ENCODE measurements at regions of chr6 and their contacts with region 1.

Region 1: DNA sequence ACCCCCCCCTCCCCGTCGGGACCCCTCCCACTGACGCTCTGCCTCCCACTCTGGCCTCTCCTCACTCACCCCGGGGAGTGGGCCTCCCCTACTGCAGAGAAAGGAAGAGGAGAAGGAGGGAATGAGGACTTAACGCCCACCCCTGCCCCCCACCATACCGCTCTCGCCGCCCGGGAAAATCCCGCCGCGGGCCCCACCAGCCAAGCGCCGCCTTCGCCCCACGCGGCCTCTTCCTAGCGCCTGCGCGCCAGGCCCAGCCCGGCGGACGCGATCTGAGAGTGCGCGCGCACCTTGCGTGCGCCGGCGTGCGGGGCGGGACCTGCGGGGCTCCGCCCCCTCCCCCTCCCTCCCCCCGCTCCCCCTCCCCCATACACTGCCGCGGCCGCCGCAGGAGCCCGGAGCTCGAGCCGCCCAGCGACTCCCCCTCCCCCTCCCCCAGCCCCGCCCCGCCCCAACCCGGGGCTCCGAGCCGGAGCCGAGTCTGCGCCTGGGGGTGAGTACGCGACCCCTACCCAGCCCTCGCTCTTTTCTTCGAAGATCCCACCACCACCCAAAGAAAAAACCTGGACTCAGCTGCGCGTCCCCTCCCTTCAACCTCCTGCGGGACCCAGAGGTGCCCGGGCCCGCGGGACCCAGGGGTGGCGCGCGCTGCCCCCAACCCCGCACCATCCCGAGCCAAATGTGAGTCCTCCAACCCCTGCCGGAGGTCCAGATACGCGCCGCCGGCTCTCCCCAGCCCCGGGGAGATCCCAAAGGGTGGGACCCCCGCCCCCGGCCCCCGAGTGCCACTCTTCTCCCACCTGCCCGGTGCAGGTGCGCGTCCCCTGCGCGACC is at the starts of genes MRPL14 and TMEM63B:
- DNase-seq: peak; percentile 79 to 97 (median 89)
- ATAC-seq: peak; percentile 87
- H3K4me3 ChIP-seq: peak within 1 kb of the TSS; percentile 96
- H3K4me3 Mint-ChIP-seq: peak within 1 kb of the TSS; percentile 93
- H3K27ac ChIP-seq: peak within 1 kb of the TSS; percentile 92
- H3K27ac Mint-ChIP-seq: peak within 1 kb of the TSS; percentile 90
- H3K4me1 ChIP-seq: peaks cover 54% of the 10 kb centered on the region
- H3K4me1 Mint-ChIP-seq: peaks cover 62% of the 10 kb centered on the region
- H3K27me3 ChIP-seq: no peaks in the 10 kb centered on the region
- H3K27me3 Mint-ChIP-seq: no peaks in the 10 kb centered on the region
- CTCF ChIP-seq: no peak
- total RNA-seq, gene MRPL14: 10.4 to 11.5 TPM
- total RNA-seq, gene TMEM63B: 11.4 to 12.8 TPM

Region 2: DNA sequence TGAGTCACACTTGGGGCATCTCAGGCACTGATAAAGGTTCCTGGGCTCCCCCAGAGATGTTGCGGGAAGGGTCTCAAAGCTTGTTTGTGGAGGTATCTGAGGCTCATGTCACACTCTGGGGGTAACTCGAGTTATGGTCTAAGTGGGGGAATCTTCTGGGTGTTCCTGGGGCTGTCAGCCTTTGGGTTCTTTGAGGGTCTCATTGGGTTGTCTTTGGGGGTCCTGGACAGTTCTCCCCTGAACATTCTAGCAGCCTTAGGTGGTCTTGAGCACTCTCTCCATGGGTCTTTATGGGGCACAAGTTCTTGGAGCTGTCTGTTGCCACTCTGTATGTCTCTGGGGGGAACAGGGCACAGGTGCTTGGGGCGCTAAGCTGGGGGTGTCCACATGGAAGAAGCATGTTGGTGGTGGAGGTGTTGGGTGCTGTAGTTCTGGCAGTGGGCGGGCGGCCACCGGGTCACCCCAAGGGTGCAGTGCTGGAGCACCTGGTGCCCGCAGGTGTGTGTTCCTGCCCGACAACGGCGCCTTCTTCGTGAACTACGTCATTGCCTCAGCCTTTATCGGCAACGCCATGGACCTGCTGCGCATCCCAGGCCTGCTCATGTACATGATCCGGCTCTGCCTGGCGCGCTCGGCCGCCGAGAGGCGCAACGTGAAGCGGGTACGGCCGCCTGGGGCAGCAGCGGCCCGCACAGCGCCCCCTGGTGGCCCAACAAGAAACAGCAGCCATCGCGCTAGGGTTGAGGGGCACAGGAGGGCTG is 24.1 kb after region 1 on chr6:
- CTCF ChIA-PET with region 1: interaction called, 9 read pairs
- POLR2A ChIA-PET with region 1: interaction called, 3 read pairs
- intact Hi-C with region 1: loop called in 1 of 2 experiments (anchors 2 kb)
- DNase-seq: peak; percentile 64 to 88 (median 76)
- ATAC-seq: peak; percentile 92
- H3K4me3 ChIP-seq: no peak overlapping the region
- H3K4me3 Mint-ChIP-seq: no peak overlapping the region
- H3K27ac ChIP-seq: no peak overlapping the region
- H3K27ac Mint-ChIP-seq: no peak overlapping the region
- H3K4me1 ChIP-seq: peaks cover 16% of the 10 kb centered on the region
- H3K4me1 Mint-ChIP-seq: peaks cover 4% of the 10 kb centered on the region
- H3K27me3 ChIP-seq: no peaks in the 10 kb centered on the region
- H3K27me3 Mint-ChIP-seq: no peaks in the 10 kb centered on the region
- CTCF ChIP-seq: peak; percentile 98

Region 3: DNA sequence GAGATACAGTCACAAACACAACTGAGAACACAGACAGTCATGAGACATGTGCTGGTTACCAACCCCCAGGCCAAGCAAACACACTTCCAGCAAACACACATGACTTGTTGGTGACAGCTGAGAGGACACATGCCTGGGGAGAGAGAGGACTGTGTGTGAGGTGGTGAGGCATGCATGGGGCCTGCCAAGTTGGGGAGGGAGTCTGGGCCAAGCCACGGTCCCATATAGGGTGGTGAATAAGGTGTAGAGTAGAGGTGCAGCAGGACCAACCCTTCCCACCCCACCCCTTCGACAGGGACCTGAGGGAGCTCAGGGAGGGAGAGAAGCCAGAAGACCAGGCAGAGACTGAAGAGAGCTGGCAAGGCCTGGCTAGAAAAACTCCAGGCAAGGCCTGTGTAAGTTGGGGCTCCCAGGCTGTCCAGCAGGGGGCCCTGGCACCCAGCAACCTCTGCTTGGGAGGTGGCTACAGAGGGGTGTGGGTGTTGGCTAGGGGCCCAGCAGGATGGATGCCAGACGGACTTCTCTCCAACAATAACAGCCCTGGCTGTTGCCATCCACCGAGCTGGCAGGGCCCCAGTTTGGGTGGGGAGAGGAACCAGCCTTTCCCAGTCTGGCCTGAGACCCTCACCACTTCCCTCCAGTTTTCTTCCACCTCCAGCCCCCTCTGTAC is 94.0 kb after region 1 on chr6:
- CTCF ChIA-PET with region 1: no interaction called
- POLR2A ChIA-PET with region 1: no interaction called
- intact Hi-C with region 1: loop called in 1 of 2 experiments (anchors 2 kb)
- DNase-seq: peak; percentile 60 to 88 (median 72)
- ATAC-seq: peak; percentile 67
- H3K4me3 ChIP-seq: no peak overlapping the region
- H3K4me3 Mint-ChIP-seq: peak overlapping the region; percentile 77
- H3K27ac ChIP-seq: no peak overlapping the region
- H3K27ac Mint-ChIP-seq: peak overlapping the region; percentile 39
- H3K4me1 ChIP-seq: peaks cover 38% of the 10 kb centered on the region
- H3K4me1 Mint-ChIP-seq: peaks cover 36% of the 10 kb centered on the region
- H3K27me3 ChIP-seq: peaks cover 4 to 7% of the 10 kb centered on the region in 2 experiments
- H3K27me3 Mint-ChIP-seq: no peaks in the 10 kb centered on the region
- CTCF ChIP-seq: peak; percentile 66

Region 4: GRCh38 chr6:44257025-44257752 is 129.8 kb after region 1 on chr6 and contains the start of gene SLC35B2:
- CTCF ChIA-PET with region 1: no interaction called
- POLR2A ChIA-PET with region 1: no interaction called
- intact Hi-C with region 1: loop called in 1 of 2 experiments (anchors 5 kb)
- DNase-seq: peak in 13 of 14 experiments; percentile 33 to 89 (median 56)
- ATAC-seq: peak; percentile 84
- H3K4me3 ChIP-seq: peak within 1 kb of the TSS; percentile 95
- H3K4me3 Mint-ChIP-seq: peak within 1 kb of the TSS; percentile 90
- H3K27ac ChIP-seq: peak within 1 kb of the TSS; percentile 63 to 76
- H3K27ac Mint-ChIP-seq: peak within 1 kb of the TSS; percentile 78
- H3K4me1 ChIP-seq: peaks cover 52% of the 10 kb centered on the region
- H3K4me1 Mint-ChIP-seq: peaks cover 57% of the 10 kb centered on the region
- H3K27me3 ChIP-seq: no peaks in the 10 kb centered on the region
- H3K27me3 Mint-ChIP-seq: no peaks in the 10 kb centered on the region
- CTCF ChIP-seq: peak; percentile 29
- total RNA-seq, gene SLC35B2: 6.4 to 7.0 TPM

Region 5: DNA sequence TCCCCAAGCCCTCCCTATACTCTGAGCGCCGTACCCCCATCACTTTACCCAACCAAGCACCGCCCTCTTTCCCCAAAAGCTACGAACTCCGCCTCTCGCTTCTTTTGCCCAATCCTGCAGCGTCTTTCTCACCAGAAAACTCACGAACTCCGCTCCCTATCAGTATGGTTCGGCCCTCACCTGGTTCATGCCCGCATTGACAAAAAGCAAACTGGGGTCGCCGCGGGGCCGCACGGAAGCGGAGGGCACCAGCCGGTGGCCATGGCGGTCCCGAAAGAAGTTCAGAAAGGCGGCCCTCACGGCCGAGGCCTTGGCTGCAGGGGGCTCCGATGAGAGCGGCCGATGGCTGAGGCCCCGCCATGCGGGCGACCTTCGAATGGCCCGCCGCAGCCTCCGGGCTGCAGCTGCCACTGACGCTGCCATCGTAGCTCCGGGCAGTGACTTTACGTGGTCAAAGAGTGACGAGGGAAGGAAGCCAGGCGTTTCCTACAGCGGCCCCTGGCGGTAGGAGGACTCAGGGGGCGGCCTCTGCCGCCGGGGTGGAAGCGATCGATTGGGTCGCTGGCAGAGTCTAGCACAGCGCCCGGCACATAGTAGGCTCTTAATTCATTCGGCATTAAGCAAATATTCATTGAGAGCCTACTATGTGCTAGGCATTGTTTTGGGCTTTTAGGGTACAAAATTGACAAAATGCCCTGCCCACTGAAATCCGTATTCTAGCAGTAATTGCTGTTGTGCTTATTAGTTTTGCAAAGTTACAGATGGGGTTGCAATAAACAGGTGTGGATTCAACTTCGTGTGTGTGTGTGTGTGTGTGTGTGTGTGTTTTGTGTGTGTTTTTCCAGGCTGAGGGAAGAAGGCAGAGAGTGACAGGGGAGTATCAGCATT is 185.7 kb after region 1 on chr6 and contains the start of gene AARS2:
- CTCF ChIA-PET with region 1: no interaction called
- POLR2A ChIA-PET with region 1: no interaction called
- intact Hi-C with region 1: loop called in 1 of 2 experiments (anchors 2 kb)
- DNase-seq: peak; percentile 84 to 97 (median 92)
- ATAC-seq: peak; percentile 90
- H3K4me3 ChIP-seq: peak within 1 kb of the TSS; percentile 87
- H3K4me3 Mint-ChIP-seq: peak within 1 kb of the TSS; percentile 97
- H3K27ac ChIP-seq: peak within 1 kb of the TSS; percentile 80 to 83
- H3K27ac Mint-ChIP-seq: peak within 1 kb of the TSS; percentile 91
- H3K4me1 ChIP-seq: peaks cover 13% of the 10 kb centered on the region
- H3K4me1 Mint-ChIP-seq: peaks cover 28% of the 10 kb centered on the region
- H3K27me3 ChIP-seq: no peaks in the 10 kb centered on the region
- H3K27me3 Mint-ChIP-seq: no peaks in the 10 kb centered on the region
- CTCF ChIP-seq: peak; percentile 97
- total RNA-seq, gene AARS2: 12.0 to 12.7 TPM

Region 6: DNA sequence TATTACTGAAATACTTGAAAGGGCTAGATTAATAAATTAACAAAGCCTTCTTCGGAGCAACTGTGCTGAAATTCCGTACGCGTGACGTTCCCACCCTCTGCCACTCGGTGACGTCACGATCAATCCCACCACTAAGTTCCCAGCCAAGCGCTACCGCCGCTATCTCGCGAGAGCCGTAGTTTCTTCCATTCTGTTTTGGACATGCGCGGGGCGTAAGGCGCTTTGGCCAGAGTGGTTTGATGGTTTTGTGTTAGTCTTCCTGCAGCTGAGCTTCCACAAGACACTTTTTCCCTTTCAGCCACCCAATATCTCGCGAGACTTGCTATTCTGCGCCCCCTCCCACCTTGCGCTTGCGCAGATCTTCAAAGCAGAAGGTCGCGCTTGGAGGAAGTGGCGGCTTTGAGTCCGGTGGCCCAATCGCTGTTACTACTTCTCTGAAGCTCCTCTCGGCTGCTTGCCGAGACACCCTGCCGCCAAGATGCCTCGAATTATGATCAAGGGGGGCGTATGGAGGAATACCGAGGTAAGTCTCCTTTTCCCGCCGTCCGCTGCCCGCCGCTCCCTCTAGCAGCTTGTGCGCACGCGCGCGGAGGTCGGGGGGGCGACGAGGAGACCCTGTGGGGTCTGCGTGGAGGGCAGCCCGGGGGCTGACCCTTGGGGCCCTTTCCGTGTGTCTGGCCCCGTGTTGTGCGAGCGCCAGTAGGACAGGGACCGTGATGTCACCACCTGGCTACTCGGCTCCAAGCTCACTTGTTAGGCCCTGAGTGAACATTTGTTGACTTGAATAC is 260.1 kb after region 1 on chr6 and contains the start of gene CDC5L:
- CTCF ChIA-PET with region 1: no interaction called
- POLR2A ChIA-PET with region 1: no interaction called
- intact Hi-C with region 1: loop called in 1 of 2 experiments (anchors 2 kb)
- DNase-seq: peak; percentile 74 to 98 (median 86)
- ATAC-seq: peak; percentile 81
- H3K4me3 ChIP-seq: peak within 1 kb of the TSS; percentile 84
- H3K4me3 Mint-ChIP-seq: peak within 1 kb of the TSS; percentile 97
- H3K27ac ChIP-seq: peak within 1 kb of the TSS; percentile 89 to 93
- H3K27ac Mint-ChIP-seq: peak within 1 kb of the TSS; percentile 93
- H3K4me1 ChIP-seq: peaks cover 19% of the 10 kb centered on the region
- H3K4me1 Mint-ChIP-seq: peaks cover 40% of the 10 kb centered on the region
- H3K27me3 ChIP-seq: no peaks in the 10 kb centered on the region
- H3K27me3 Mint-ChIP-seq: no peaks in the 10 kb centered on the region
- CTCF ChIP-seq: no peak
- total RNA-seq, gene CDC5L: 18.9 to 19.9 TPM

Region 7: DNA sequence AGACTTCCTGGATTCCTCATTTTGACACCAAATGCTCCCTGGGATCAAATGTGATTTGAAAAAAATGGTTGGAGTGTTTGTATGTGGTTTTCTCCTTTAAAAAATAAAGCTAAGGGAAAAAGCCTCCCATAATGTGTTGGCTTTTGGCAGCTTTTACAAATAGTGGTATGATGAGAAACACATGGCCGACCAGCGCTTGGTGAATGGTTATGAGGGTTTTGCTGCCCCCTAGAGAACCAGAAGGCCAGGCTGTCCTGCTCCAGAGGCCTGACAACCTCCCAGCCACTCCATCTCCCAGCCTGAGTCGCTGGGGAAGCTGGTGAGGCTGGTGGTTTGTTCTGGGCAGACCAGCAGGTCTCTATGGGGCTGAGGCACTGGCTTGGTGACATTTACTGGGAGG is 1818.9 kb after region 1 on chr6:
- CTCF ChIA-PET with region 1: no interaction called
- POLR2A ChIA-PET with region 1: no interaction called
- intact Hi-C with region 1: no loop called
- DNase-seq: no peak
- ATAC-seq: no peak
- H3K4me3 ChIP-seq: no peak overlapping the region
- H3K4me3 Mint-ChIP-seq: no peak overlapping the region
- H3K27ac ChIP-seq: no peak overlapping the region
- H3K27ac Mint-ChIP-seq: no peak overlapping the region
- H3K4me1 ChIP-seq: no peaks in the 10 kb centered on the region
- H3K4me1 Mint-ChIP-seq: no peaks in the 10 kb centered on the region
- H3K27me3 ChIP-seq: no peaks in the 10 kb centered on the region
- H3K27me3 Mint-ChIP-seq: no peaks in the 10 kb centered on the region
- CTCF ChIP-seq: no peak